ENCODE measurements at regions of chr15 and their contacts with region 1.

Region 1: DNA sequence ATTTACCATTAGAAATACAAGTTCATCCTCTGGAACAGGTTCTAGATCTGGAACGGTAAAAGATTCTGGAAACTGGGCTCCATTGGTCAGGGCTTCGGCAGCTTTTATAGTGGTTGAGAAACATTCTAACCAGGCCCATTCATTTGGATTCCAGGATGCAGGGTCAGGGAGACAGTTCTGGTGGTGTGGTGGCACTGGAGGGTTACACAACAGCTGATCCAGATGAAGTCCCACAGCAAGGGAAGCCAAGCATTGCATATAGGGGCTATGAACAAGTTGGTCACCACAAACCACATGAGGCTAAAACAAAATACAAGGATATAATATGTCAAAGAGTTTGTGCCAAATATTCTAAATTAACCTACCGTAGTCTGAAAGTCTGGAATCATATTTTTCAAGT is 43.0 kb downstream of the FBXL22 start:
- DNase-seq: no peak
- H3K4me3 ChIP-seq: no peak overlapping the region
- H3K4me3 Mint-ChIP-seq: no peak overlapping the region
- H3K27ac ChIP-seq: no peak overlapping the region
- H3K27ac Mint-ChIP-seq: peak overlapping the region in 1 of 7 donors; percentile 37
- H3K4me1 ChIP-seq: no peaks in the 10 kb centered on the region
- H3K4me1 Mint-ChIP-seq: no peaks in the 10 kb centered on the region
- H3K27me3 ChIP-seq: no peaks in the 10 kb centered on the region
- H3K27me3 Mint-ChIP-seq: no peaks in the 10 kb centered on the region
- CTCF ChIP-seq: no peak

Region 2: DNA sequence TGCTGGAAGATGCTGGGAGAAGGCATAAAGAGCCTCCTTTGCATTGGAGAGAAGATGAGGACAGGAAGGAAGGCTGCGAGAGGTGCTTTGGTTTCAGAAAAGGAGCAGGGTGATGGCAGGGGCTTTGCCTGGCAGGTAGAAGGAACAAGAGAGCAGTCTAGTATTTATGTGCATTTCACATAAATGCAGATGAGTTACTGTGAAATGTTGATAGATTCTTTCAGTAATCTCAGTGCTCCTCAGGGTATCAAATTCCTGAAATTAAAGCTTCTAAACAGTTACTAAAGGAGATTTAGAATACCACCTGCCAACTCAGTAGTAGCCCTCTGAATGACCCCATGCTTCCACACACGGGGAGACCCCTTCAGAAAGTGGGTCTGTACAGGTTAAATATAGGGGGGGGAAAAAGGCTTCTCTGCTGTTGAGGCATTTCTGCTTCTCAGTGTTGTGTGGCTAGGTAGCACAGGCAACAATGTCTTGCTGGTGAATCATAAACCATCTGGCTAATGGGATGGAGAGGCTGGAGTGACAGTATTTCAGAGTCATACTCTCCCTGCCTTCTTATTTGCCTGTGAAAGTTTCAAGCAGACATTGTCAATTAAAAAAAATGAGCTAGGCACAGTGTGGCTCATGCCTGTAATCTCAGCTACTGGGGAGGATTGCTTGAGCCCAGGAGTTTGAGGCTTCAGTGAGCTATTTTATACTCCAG is 57.3 kb before region 1 on chr15:
- intact Hi-C with region 1: loop called in 1 of 2 experiments (anchors 10 kb)
- DNase-seq: no peak
- H3K4me3 ChIP-seq: no peak overlapping the region
- H3K4me3 Mint-ChIP-seq: no peak overlapping the region
- H3K27ac ChIP-seq: peak overlapping the region in 1 of 2 donors; percentile 34
- H3K27ac Mint-ChIP-seq: peak overlapping the region in 4 of 7 donors; percentile 4 to 68 (median 40)
- H3K4me1 ChIP-seq: no peaks in the 10 kb centered on the region
- H3K4me1 Mint-ChIP-seq: no peaks in the 10 kb centered on the region
- H3K27me3 ChIP-seq: no peaks in the 10 kb centered on the region
- H3K27me3 Mint-ChIP-seq: no peaks in the 10 kb centered on the region
- CTCF ChIP-seq: no peak

Region 3: DNA sequence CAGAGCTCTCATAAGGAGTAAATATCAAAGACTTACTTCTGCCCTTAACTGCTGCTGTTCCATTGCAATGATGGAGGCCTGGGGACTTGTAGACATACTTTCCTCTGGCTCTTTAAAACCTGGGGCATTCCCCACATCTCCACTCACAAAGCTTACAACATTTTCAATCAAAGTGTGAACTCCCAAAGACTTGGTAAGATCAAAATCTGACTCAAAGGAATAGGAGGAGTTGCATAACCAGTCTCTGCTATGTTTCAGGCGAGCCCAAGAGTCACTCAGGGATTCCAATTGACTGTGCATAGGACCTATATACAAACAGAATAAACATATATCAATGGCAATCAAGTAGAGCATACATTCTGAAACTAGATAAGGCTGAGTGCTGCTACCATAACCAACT is 58.5 kb after region 1 on chr15:
- intact Hi-C with region 1: loop called in 1 of 2 experiments (anchors 5 kb)
- DNase-seq: peak in 1 of 3 donors; percentile 11
- H3K4me3 ChIP-seq: no peak overlapping the region
- H3K4me3 Mint-ChIP-seq: no peak overlapping the region
- H3K27ac ChIP-seq: peak overlapping the region in 1 of 2 donors; percentile 66
- H3K27ac Mint-ChIP-seq: peak overlapping the region in 6 of 7 donors; percentile 4 to 87 (median 56)
- H3K4me1 ChIP-seq: peaks cover 7 to 9% of the 10 kb centered on the region in 2 donors
- H3K4me1 Mint-ChIP-seq: peaks cover 11% of the 10 kb centered on the region
- H3K27me3 ChIP-seq: no peaks in the 10 kb centered on the region
- H3K27me3 Mint-ChIP-seq: no peaks in the 10 kb centered on the region
- CTCF ChIP-seq: no peak

Measured in CD14-positive monocyte (primary cell).